CD4-positive, alpha-beta T cell (primary cell): ENCODE measurements at regions of chr13 and their contacts with region 1.

Region 1: DNA sequence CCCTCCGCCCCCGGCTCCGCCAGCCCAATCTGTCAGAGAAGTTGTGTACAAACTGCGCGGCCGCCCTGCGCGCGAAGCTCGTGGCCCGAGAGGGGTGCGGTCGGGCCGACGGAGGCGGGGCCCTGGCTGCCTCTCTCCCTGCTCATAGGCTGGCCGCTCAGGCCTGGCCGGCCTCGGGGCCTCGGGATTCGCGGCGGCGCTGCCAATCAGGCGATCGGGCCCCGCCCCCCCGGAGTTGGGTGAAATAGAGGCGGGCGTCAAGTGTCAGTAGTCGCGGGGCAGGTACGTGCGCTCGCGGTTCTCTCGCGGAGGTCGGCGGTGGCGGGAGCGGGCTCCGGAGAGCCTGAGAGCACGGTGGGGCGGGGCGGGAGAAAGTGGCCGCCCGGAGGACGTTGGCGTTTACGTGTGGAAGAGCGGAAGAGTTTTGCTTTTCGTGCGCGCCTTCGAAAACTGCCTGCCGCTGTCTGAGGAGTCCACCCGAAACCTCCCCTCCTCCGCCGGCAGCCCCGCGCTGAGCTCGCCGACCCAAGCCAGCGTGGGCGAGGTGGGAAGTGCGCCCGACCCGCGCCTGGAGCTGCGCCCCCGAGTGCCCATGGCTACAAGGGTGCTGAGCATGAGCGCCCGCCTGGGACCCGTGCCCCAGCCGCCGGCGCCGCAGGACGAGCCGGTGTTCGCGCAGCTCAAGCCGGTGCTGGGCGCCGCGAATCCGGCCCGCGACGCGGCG is at the start of gene KLF5:
- DNase-seq: peak; percentile 90 to 97 (median 95)
- ATAC-seq: peak; percentile 94
- H3K4me3 ChIP-seq: peak within 1 kb of the TSS; percentile 63
- H3K4me3 Mint-ChIP-seq: peak within 1 kb of the TSS; percentile 96
- H3K27ac ChIP-seq: no peak within 1 kb of the TSS
- H3K27ac Mint-ChIP-seq: peak within 1 kb of the TSS; percentile 75
- H3K4me1 ChIP-seq: peaks cover 17% of the 10 kb centered on the region
- H3K4me1 Mint-ChIP-seq: peaks cover 22% of the 10 kb centered on the region
- H3K27me3 ChIP-seq: peaks cover 6 to 26% of the 10 kb centered on the region in 2 experiments
- H3K27me3 Mint-ChIP-seq: peaks cover 32% of the 10 kb centered on the region
- CTCF ChIP-seq: no peak
- total RNA-seq, gene KLF5: 10.8 to 12.3 TPM

Region 2: GRCh38 chr13:73521290-73521624 is 462.4 kb after region 1 on chr13:
- CTCF ChIA-PET with region 1: no interaction called
- POLR2A ChIA-PET with region 1: interaction called, 6 read pairs
- intact Hi-C with region 1: loop called in 1 of 2 experiments (anchors 10 kb)
- DNase-seq: peak in 8 of 14 experiments; percentile 1 to 68 (median 31)
- ATAC-seq: peak; percentile 84
- H3K4me3 ChIP-seq: peak overlapping the region; percentile 50
- H3K4me3 Mint-ChIP-seq: peak overlapping the region; percentile 84
- H3K27ac ChIP-seq: peak overlapping the region; percentile 31 to 59
- H3K27ac Mint-ChIP-seq: peak overlapping the region; percentile 90
- H3K4me1 ChIP-seq: peaks cover 9% of the 10 kb centered on the region
- H3K4me1 Mint-ChIP-seq: peaks cover 23% of the 10 kb centered on the region
- H3K27me3 ChIP-seq: no peaks in the 10 kb centered on the region
- H3K27me3 Mint-ChIP-seq: no peaks in the 10 kb centered on the region
- CTCF ChIP-seq: no peak

Region 3: DNA sequence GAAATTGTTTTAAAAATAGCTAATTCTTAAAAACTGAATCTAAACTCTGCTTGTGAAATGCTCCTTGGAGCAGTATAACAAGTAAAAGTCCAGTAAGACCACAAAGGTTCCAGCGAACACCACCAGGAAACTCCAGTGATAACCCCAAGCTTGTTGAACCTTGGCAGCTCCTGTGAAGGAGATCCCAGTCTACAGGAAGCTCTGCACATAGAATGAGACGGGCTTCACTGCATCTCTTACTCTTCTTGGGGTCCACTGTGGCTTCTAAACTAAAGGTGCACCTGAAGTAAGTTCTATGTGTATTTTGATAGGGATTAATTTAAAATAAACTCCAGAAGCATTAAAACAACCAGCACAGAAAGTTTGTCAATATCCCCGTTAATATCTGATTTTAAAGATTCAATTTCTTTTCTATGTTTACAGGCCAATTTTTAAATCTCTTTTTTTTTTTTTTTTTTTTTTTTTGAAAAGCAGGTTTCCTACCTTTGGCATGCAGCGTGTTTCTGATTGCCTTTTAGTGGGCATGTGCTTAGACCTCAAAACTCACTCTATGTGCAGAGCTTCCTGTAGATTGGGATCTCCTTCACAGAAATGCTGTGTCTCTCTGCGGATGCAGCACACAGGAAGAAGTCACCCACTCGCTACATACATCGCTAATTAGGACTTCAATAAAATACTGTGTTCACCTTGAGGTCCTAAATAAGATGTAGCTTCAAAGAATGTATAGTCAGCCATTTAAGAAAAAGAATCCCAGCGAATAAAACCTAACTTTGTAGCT is 566.9 kb after region 1 on chr13:
- CTCF ChIA-PET with region 1: no interaction called
- POLR2A ChIA-PET with region 1: no interaction called
- intact Hi-C with region 1: loop called in 1 of 2 experiments (anchors 5 kb)
- DNase-seq: peak in 11 of 14 experiments; percentile 3 to 83 (median 38)
- ATAC-seq: peak; percentile 99
- H3K4me3 ChIP-seq: no peak overlapping the region
- H3K4me3 Mint-ChIP-seq: peak overlapping the region; percentile 58
- H3K27ac ChIP-seq: peak overlapping the region in 1 of 2 donors; percentile 41
- H3K27ac Mint-ChIP-seq: peak overlapping the region; percentile 76
- H3K4me1 ChIP-seq: peaks cover 17% of the 10 kb centered on the region
- H3K4me1 Mint-ChIP-seq: peaks cover 61% of the 10 kb centered on the region
- H3K27me3 ChIP-seq: no peaks in the 10 kb centered on the region
- H3K27me3 Mint-ChIP-seq: no peaks in the 10 kb centered on the region
- CTCF ChIP-seq: no peak

Region 4: GRCh38 chr13:73715114-73715910 is 656.4 kb after region 1 on chr13:
- CTCF ChIA-PET with region 1: interaction called, 4 read pairs
- POLR2A ChIA-PET with region 1: interaction called, 5 read pairs
- intact Hi-C with region 1: loop called in 1 of 2 experiments (anchors 5 kb)
- DNase-seq: peak; percentile 21 to 94 (median 46)
- ATAC-seq: peak; percentile 88
- H3K4me3 ChIP-seq: peak overlapping the region; percentile 34
- H3K4me3 Mint-ChIP-seq: peak overlapping the region; percentile 73
- H3K27ac ChIP-seq: peak overlapping the region; percentile 62 to 73
- H3K27ac Mint-ChIP-seq: peak overlapping the region; percentile 94
- H3K4me1 ChIP-seq: peaks cover 35% of the 10 kb centered on the region
- H3K4me1 Mint-ChIP-seq: peaks cover 53% of the 10 kb centered on the region
- H3K27me3 ChIP-seq: no peaks in the 10 kb centered on the region
- H3K27me3 Mint-ChIP-seq: no peaks in the 10 kb centered on the region
- CTCF ChIP-seq: no peak